BJ (cell line): ENCODE measurements at regions of chr22 and their contacts with region 1.

Region 1: DNA sequence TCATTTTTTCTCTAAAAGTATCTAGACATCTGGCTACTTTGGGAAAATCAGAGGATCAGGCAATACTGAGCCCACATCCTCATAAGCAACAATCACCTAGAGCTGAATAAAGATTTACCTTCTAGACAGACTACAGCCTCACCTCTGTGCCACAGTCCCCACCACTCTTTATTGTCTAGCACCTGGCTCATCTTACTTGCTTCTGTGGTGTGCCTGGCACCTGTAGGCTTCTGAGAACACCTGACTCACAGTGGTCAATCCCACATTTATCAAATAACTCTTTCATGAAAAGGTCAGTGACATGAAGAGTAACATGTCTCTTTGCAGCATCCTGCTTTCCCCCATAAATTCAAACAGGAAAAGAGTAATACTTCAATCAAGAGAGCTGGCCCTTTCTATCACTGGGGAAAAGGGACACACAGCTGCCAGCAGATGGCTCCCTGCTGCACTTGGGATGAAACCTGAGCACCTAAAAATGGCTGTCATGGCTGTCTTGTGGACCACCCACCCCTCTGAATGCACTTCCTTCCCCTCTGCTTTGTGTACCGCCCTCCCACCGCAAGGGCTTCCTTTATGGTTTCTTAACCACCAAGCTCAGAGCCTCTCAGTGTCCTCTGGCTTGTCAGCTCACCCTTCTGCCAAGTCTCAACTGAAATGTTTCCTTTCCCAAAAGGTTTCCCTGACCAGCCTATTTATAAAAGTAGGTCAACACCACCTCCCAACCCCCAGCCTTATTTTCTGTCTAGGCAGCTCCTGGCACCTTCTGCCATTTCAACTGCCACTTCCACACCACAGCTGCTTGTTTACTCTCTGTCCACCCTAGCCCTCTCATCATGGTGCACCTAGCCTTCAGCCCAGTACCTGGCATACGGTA is 9.3 kb downstream of the TFIP11 start:
- DNase-seq: no peak
- H3K4me3 ChIP-seq: no peak overlapping the region
- H3K27me3 ChIP-seq: no peaks in the 10 kb centered on the region
- CTCF ChIP-seq: peak; percentile 65

Region 2: GRCh38 chr22:26354707-26355106 is 148.2 kb before region 1 on chr22:
- CTCF ChIA-PET with region 1: no interaction called
- POLR2A ChIA-PET with region 1: no interaction called
- DNase-seq: no peak
- H3K4me3 ChIP-seq: no peak overlapping the region
- H3K27me3 ChIP-seq: peaks cover 2% of the 10 kb centered on the region
- CTCF ChIP-seq: no peak

Region 3: GRCh38 chr22:26404851-26405421 is 98.0 kb before region 1 on chr22:
- CTCF ChIA-PET with region 1: no interaction called
- POLR2A ChIA-PET with region 1: no interaction called
- DNase-seq: no peak
- H3K4me3 ChIP-seq: no peak overlapping the region
- H3K27me3 ChIP-seq: peaks cover 6% of the 10 kb centered on the region
- CTCF ChIP-seq: no peak

Region 4: GRCh38 chr22:26489447-26490031 is 13.4 kb before region 1 on chr22:
- CTCF ChIA-PET with region 1: interaction called, 14 read pairs
- POLR2A ChIA-PET with region 1: no interaction called
- DNase-seq: no peak
- H3K4me3 ChIP-seq: no peak overlapping the region
- H3K27me3 ChIP-seq: no peaks in the 10 kb centered on the region
- CTCF ChIP-seq: no peak

Region 5: GRCh38 chr22:26669060-26669481 is 166.1 kb after region 1 on chr22:
- CTCF ChIA-PET with region 1: interaction called, 22 read pairs
- POLR2A ChIA-PET with region 1: interaction called, 3 read pairs
- DNase-seq: no peak
- H3K4me3 ChIP-seq: no peak overlapping the region
- H3K27me3 ChIP-seq: no peaks in the 10 kb centered on the region
- CTCF ChIP-seq: peak; percentile 66